ENCODE measurements at regions of chr5 and their contacts with region 1.

Region 1: GRCh38 chr5:96614110-96614691 is 48.0 kb upstream of the CAST start:
- DNase-seq: peak; percentile 65
- ATAC-seq: peak; percentile 39
- H3K4me3 Mint-ChIP-seq: no peak overlapping the region
- H3K27ac Mint-ChIP-seq: no peak overlapping the region
- H3K4me1 Mint-ChIP-seq: peaks cover 5% of the 10 kb centered on the region
- H3K27me3 Mint-ChIP-seq: peaks cover 37% of the 10 kb centered on the region

Region 2: GRCh38 chr5:96333391-96333790 is 280.8 kb before region 1 on chr5:
- CTCF ChIA-PET with region 1: no interaction called
- POLR2A ChIA-PET with region 1: no interaction called
- DNase-seq: no peak
- ATAC-seq: no peak
- H3K4me3 Mint-ChIP-seq: no peak overlapping the region
- H3K27ac Mint-ChIP-seq: no peak overlapping the region
- H3K4me1 Mint-ChIP-seq: no peaks in the 10 kb centered on the region
- H3K27me3 Mint-ChIP-seq: peaks cover 9% of the 10 kb centered on the region

Region 3: GRCh38 chr5:96344678-96345577 is 269.3 kb before region 1 on chr5:
- CTCF ChIA-PET with region 1: interaction called, 11 read pairs
- POLR2A ChIA-PET with region 1: no interaction called
- DNase-seq: peak; percentile 55
- ATAC-seq: peak; percentile 93
- H3K4me3 Mint-ChIP-seq: peak overlapping the region; percentile 37
- H3K27ac Mint-ChIP-seq: no peak overlapping the region
- H3K4me1 Mint-ChIP-seq: peaks cover 17% of the 10 kb centered on the region
- H3K27me3 Mint-ChIP-seq: peaks cover 9% of the 10 kb centered on the region

Region 4: DNA sequence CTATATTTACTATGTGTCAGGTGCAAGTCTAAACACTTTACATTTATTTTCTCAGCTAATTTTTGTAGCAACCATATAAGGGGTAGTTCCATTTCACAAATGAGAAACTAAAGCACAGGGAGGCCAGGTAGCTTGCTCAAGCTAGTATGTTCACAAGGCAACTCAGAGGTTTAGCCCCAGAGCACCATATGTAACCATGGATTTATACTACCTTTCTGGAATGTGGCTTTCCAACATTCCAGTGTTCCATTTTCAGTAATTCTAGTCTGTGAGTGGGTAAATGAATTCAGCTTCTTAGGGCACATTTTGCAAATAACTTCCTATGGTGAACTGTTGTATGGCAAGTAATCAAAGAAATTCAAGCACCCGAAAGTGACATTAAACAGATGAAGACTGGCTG is 23.0 kb after region 1 on chr5:
- CTCF ChIA-PET with region 1: interaction called, 12 read pairs
- POLR2A ChIA-PET with region 1: no interaction called
- DNase-seq: no peak
- ATAC-seq: no peak
- H3K4me3 Mint-ChIP-seq: no peak overlapping the region
- H3K27ac Mint-ChIP-seq: no peak overlapping the region
- H3K4me1 Mint-ChIP-seq: peaks cover 3% of the 10 kb centered on the region
- H3K27me3 Mint-ChIP-seq: peaks cover 24% of the 10 kb centered on the region

Region 5: GRCh38 chr5:96687812-96688453 is 73.7 kb after region 1 on chr5:
- CTCF ChIA-PET with region 1: interaction called, 51 read pairs
- POLR2A ChIA-PET with region 1: no interaction called
- DNase-seq: no peak
- ATAC-seq: peak; percentile 61
- H3K4me3 Mint-ChIP-seq: no peak overlapping the region
- H3K27ac Mint-ChIP-seq: no peak overlapping the region
- H3K4me1 Mint-ChIP-seq: peaks cover 8% of the 10 kb centered on the region
- H3K27me3 Mint-ChIP-seq: no peaks in the 10 kb centered on the region

Region 6: GRCh38 chr5:96743065-96743768 is 129.0 kb after region 1 on chr5:
- CTCF ChIA-PET with region 1: interaction called, 11 read pairs
- POLR2A ChIA-PET with region 1: no interaction called
- DNase-seq: no peak
- ATAC-seq: no peak
- H3K4me3 Mint-ChIP-seq: no peak overlapping the region
- H3K27ac Mint-ChIP-seq: no peak overlapping the region
- H3K4me1 Mint-ChIP-seq: peaks cover 2% of the 10 kb centered on the region
- H3K27me3 Mint-ChIP-seq: no peaks in the 10 kb centered on the region